ENCODE measurements at regions of chr1 and their contacts with region 1.

Region 1: GRCh38 chr1:17611975-17612374 is 72.5 kb downstream of the ARHGEF10L start:
- DNase-seq: no peak
- ATAC-seq: no peak
- H3K4me3 Mint-ChIP-seq: no peak overlapping the region
- H3K27ac Mint-ChIP-seq: no peak overlapping the region
- H3K4me1 Mint-ChIP-seq: no peaks in the 10 kb centered on the region
- H3K27me3 Mint-ChIP-seq: no peaks in the 10 kb centered on the region
- CTCF ChIP-seq: no peak

Region 2: DNA sequence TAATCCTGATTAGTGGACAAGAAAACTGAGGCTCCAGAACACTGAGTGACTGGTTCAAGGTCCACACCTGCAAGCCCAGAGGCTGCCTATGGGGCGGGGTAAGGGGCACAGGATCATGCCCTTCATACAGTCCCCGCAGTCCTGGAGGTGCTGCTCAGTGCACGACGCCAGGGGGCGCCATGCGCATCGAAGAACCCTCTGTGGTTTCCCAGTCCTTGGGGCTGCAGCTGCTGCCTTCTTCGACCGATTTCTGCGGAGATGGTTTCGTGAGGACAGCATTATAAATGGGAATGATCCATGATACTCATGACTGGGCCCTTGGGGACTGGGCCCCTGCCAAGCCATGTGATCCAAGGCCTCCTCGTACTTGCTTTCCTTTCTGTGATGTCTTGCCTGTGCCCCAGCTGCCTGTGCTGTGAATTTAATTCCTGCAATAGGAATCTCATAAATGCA is 109.6 kb before region 1 on chr1:
- CTCF ChIA-PET with region 1: interaction called, 35 read pairs
- POLR2A ChIA-PET with region 1: no interaction called
- intact Hi-C with region 1: no loop called
- DNase-seq: peak; percentile 78
- ATAC-seq: peak; percentile 80
- H3K4me3 Mint-ChIP-seq: no peak overlapping the region
- H3K27ac Mint-ChIP-seq: no peak overlapping the region
- H3K4me1 Mint-ChIP-seq: no peaks in the 10 kb centered on the region
- H3K27me3 Mint-ChIP-seq: peaks cover 9% of the 10 kb centered on the region
- CTCF ChIP-seq: peak; percentile 84

Measured in activated CD8-positive, alpha-beta T cell treated with anti-CD3 and anti-CD28 coated beads for 36 hours (primary cell).